Dorsolateral prefrontal cortex (tissue), 120 donors: ENCODE measurements at regions of chr3 and their contacts with region 1.

Region 1: GRCh38 chr3:13495921-13496723 is 16.0 kb downstream of the HDAC11 start:
- DNase-seq: peak; percentile 76 to 89 (median 83)
- H3K4me3 ChIP-seq: peak overlapping the region in 8 of 59 donors; percentile 3 to 33 (median 14)
- H3K27ac ChIP-seq: peak overlapping the region; percentile 52 to 99 (median 92)
- H3K27me3 ChIP-seq: no peaks in the 10 kb centered on the region
- CTCF ChIP-seq: peak; percentile 66 to 99 (median 95)

Region 2: DNA sequence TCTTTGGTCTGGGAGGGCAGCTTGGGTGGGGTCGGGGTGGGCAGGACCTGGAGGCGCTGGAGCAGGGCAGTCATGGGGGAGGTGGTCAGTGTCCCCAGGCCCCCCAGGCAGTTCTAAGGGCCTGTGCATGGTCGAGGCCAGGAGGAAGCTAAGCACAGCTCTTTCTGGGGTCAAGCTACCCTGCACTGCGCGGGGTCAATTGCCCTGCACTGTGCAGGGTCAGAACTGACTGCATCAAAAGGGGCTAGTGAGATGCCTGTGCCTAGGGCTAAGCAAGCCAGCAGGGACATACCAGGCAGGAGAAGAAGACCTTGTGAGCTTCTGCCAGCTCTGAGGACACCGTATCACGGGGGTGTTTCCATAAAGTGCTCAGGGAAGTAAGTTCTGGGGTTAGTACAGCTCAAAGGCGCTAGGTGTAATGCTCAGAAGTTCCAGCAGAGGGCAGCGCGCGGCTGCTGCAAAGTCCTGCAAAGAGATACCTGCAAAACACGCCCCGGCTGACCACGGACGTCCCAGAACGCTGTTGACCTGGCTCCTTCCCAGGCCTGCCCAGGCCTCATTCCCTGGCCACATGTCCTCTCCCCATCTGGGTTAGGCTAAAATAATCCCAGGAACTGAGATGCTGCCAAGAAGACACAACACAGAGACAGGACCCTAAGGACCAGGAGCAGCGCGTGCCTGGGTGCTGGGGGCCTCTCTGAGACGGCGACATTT is 404.1 kb before region 1 on chr3:
- intact Hi-C with region 1: loop called (anchors 10 kb)
- DNase-seq: peak; percentile 80 to 92 (median 88)
- H3K4me3 ChIP-seq: peak overlapping the region in 15 of 59 donors; percentile 6 to 31 (median 22)
- H3K27ac ChIP-seq: peak overlapping the region in 14 of 59 donors; percentile 12 to 62 (median 32)
- H3K27me3 ChIP-seq: no peaks in the 10 kb centered on the region
- CTCF ChIP-seq: peak; percentile 81 to 99 (median 98)

Region 3: DNA sequence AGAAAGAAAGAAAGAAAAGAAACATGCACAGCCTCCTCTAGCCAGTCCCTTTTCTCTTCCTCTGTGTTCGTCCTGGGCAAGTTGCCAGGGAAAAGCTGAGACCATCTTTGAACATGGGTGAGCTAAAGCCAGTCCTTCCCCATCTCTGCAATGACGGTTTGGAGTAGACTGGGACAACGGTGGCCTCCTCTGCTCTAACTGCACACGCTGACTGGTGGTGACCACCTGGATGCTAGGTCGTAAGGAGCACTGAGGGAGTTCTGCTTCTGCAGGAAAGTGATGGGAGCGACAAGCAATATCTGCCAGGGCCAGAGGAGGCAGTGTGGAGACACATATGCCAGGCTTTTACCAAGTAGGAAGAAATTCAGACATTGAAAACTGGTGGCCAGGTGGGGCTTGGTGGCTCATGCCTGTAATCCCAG is 187.7 kb before region 1 on chr3:
- intact Hi-C with region 1: no loop called
- DNase-seq: peak in 8 of 10 donors; percentile 18 to 73 (median 58)
- H3K4me3 ChIP-seq: peak overlapping the region in 20 of 59 donors; percentile 6 to 44 (median 30)
- H3K27ac ChIP-seq: peak overlapping the region in 1 of 59 donors; percentile 7
- H3K27me3 ChIP-seq: no peaks in the 10 kb centered on the region
- CTCF ChIP-seq: peak in 54 of 56 donors; percentile 31 to 78 (median 63)

Region 4: GRCh38 chr3:13452490-13453335 is 43.4 kb before region 1 on chr3:
- intact Hi-C with region 1: loop called in 1 of 2 experiments (anchors 5 kb)
- DNase-seq: peak in 6 of 10 donors; percentile 30 to 59 (median 54)
- H3K4me3 ChIP-seq: peak overlapping the region in 58 of 59 donors; percentile 35 to 88 (median 62)
- H3K27ac ChIP-seq: peak overlapping the region; percentile 85 to 100 (median 97)
- H3K27me3 ChIP-seq: no peaks in the 10 kb centered on the region
- CTCF ChIP-seq: peak; percentile 62 to 90 (median 79)

Region 5: DNA sequence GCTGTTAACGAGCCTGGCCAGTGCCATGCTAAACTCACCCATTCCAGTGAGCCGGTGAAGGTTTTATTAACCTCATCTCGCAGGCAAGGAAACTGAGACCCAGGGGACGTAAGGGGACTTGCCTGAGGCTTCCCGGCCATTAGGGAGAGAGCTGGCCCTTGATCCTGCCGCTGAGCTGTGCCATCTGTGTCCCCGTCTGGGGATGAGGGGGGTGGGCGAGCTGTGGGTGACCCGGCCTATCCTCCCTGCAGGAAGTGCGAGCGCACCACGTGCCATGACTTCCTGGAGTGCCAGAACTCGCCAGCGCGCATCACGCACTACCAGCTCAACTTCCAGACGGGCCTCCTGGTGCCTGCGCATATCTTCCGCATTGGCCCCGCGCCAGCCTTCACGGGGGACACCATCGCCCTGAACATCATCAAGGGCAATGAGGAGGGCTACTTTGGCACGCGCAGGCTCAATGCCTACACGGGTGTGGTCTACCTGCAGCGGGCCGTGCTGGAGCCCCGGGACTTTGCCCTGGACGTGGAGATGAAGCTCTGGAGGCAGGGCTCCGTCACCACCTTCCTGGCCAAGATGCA is 141.3 kb after region 1 on chr3:
- intact Hi-C with region 1: no loop called
- DNase-seq: no peak
- H3K4me3 ChIP-seq: no peak overlapping the region
- H3K27ac ChIP-seq: no peak overlapping the region
- H3K27me3 ChIP-seq: no peaks in the 10 kb centered on the region
- CTCF ChIP-seq: no peak

Region 6: GRCh38 chr3:13648060-13649001 is 152.2 kb after region 1 on chr3:
- intact Hi-C with region 1: loop called (anchors 1 kb)
- DNase-seq: peak; percentile 79 to 92 (median 88)
- H3K4me3 ChIP-seq: peak overlapping the region in 3 of 59 donors; percentile 18 to 25 (median 24)
- H3K27ac ChIP-seq: peak overlapping the region in 1 of 59 donors; percentile 61
- H3K27me3 ChIP-seq: peaks cover 0 to 5% (median 0%) of the 10 kb centered on the region in 45 donors
- CTCF ChIP-seq: peak; percentile 86 to 100 (median 98)

Region 7: DNA sequence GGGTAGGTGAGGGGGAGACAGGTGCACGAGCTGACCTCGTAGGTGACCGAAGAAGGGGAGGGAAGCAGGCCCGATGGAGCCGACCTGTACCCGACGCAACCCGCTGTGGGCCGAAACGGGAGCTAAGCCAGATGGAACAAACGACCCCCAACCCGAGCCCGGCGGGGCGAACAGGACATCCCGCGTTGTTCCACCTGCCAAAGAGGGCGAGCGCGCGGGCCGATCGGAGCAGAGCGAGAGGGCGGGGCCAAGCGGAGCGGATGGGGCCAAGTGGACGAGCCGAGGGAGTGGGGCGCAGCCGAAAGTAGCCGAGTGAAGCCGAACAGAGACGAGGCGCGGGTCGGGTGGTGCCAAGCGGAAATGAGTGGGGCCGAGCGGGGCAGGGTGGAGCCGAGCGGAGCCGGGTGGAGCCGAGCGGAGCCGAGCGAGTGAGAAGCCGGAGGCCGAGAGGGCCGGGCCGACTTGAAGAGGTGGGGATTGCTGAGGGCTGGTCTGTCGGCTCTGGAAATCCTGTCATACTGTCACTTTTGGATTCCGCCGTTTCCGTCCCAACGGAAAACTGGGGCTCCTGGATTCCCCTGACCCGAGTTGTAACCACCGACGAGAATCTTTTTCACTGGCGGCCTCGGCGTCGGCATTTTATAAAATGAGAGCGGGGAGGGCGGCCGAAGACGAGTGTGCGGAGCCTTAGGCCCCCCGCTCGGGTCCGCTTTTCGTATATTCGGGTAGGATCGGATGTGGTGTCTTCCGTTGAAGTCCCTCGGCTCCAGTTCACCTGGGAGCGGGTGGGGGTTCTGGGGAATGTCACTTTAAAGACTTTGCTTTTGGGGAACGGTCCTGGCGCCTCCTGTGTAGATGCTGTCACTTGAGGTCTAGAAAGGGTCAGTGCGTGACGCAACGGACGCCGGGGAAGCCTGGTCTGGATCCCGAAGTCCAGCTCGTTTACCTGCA is 399.3 kb after region 1 on chr3:
- intact Hi-C with region 1: loop called in 1 of 2 experiments (anchors 10 kb)
- DNase-seq: peak; percentile 75 to 96 (median 91)
- H3K4me3 ChIP-seq: peak overlapping the region; percentile 40 to 90 (median 75)
- H3K27ac ChIP-seq: peak overlapping the region in 46 of 59 donors; percentile 9 to 85 (median 46)
- H3K27me3 ChIP-seq: no peaks in the 10 kb centered on the region
- CTCF ChIP-seq: peak in 17 of 56 donors; percentile 8 to 54 (median 21)

Region 8: DNA sequence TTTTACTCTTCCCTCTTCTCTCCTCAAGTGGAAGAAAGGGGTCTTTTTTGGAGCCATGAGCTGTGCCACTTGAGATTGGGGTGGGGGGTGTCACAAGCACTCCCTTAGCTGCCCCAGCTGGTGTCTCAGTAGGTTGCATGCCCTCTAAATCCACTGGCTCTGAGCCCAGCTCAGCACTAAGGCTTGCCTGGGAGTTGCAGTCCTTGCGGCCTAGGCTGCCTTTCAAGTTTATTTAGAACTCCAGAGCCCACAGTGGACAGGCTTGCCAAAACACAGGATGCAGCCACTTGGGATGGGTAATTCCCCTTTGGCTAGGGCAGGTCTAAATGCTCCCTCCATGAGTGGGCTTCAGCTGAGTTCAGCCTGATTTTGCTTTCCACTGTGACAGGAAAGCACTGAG is 1203.5 kb after region 1 on chr3:
- intact Hi-C with region 1: no loop called
- DNase-seq: no peak
- H3K4me3 ChIP-seq: no peak overlapping the region
- H3K27ac ChIP-seq: no peak overlapping the region
- H3K27me3 ChIP-seq: no peaks in the 10 kb centered on the region
- CTCF ChIP-seq: no peak